ENCODE measurements at regions of chr5 and their contacts with region 1.

Region 1: GRCh38 chr5:43484106-43484849 is 613 bp upstream of the TMEM267 start:
- DNase-seq: peak; percentile 56 to 74
- ATAC-seq: peak; percentile 86 to 88
- H3K4me3 ChIP-seq: peak overlapping the region; percentile 72 to 98 (median 84)
- H3K27ac ChIP-seq: peak overlapping the region; percentile 93 to 98 (median 96)
- H3K4me1 ChIP-seq: peaks cover 17% of the 10 kb centered on the region in 2 donors
- H3K27me3 ChIP-seq: no peaks in the 10 kb centered on the region
- CTCF ChIP-seq: peak; percentile 61 to 81 (median 63)
- POLR2A ChIP-seq: peak in 1 of 2 donors; percentile 10

Region 2: DNA sequence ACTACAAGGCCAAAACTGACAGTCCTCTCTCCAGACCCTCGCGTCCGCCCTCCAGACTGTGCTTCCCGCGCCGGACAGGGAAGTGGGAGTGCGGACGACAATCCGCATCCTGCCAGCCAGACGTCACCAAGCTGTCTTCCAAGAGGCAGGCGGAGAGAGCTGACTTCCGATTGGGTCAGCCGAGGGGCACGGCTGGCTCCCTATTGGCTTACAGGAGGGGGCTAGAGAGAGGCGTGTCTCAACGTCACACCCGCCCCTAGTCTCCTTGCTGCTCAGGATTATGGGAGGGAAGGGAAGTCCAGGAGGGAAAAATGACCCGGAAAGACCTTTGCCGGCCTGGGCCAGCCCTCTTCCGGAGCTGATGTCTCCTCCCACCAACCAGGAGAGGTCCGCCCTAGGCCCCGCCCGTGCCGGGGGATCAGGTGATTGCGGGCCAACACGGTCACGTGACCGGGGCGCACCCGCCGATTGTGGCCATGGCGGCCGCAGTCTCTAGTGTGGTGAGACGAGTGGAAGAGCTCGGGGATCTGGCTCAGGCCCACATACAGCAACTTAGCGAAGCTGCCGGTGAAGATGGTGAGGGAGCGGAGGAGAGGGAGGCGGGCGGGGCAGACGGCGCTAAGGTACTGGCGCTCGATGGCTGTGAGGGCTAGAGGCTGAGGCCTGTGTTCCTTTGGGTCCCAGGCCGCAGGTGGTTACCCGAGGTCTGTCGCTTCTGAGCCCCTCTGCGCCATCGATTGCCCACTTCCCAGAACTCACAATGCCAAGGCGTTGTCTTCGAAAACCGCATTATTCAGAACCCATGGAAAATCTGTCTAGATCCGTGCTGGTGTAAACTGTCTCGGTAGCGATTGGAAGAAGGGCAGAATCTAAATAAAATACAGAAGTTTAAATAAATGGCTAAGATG is 1580.1 kb before region 1 on chr5 and contains the start of gene RIMOC1:
- in situ Hi-C with region 1: no loop called
- intact Hi-C with region 1: loop called (anchors 10 kb)
- DNase-seq: peak; percentile 98 to 99
- ATAC-seq: peak; percentile 98 to 99
- H3K4me3 ChIP-seq: peak within 1 kb of the TSS; percentile 80 to 88 (median 84)
- H3K27ac ChIP-seq: peak within 1 kb of the TSS; percentile 89 to 95 (median 93)
- H3K4me1 ChIP-seq: peaks cover 27 to 46% of the 10 kb centered on the region in 2 donors
- H3K27me3 ChIP-seq: no peaks in the 10 kb centered on the region
- CTCF ChIP-seq: peak in 2 of 5 experiments; percentile 50 to 59
- POLR2A ChIP-seq: peak; percentile 85 to 95
- total RNA-seq, gene RIMOC1: 5.0 to 8.2 (median 6.2) TPM

Region 3: GRCh38 chr5:43120720-43121564 is 363.3 kb before region 1 on chr5 and contains the start of gene ZNF131:
- in situ Hi-C with region 1: no loop called
- intact Hi-C with region 1: loop called (anchors 5 kb)
- DNase-seq: peak; percentile 93 to 94
- ATAC-seq: peak; percentile 83 to 86
- H3K4me3 ChIP-seq: peak within 1 kb of the TSS; percentile 86 to 94 (median 92)
- H3K27ac ChIP-seq: peak within 1 kb of the TSS; percentile 94 to 98 (median 96)
- H3K4me1 ChIP-seq: peaks cover 35 to 50% of the 10 kb centered on the region in 2 donors
- H3K27me3 ChIP-seq: no peaks in the 10 kb centered on the region
- CTCF ChIP-seq: peak in 1 of 5 experiments; percentile 19
- POLR2A ChIP-seq: peak in 1 of 2 donors; percentile 86
- total RNA-seq, gene ZNF131: 16.4 to 44.6 (median 18.7) TPM

Region 4: DNA sequence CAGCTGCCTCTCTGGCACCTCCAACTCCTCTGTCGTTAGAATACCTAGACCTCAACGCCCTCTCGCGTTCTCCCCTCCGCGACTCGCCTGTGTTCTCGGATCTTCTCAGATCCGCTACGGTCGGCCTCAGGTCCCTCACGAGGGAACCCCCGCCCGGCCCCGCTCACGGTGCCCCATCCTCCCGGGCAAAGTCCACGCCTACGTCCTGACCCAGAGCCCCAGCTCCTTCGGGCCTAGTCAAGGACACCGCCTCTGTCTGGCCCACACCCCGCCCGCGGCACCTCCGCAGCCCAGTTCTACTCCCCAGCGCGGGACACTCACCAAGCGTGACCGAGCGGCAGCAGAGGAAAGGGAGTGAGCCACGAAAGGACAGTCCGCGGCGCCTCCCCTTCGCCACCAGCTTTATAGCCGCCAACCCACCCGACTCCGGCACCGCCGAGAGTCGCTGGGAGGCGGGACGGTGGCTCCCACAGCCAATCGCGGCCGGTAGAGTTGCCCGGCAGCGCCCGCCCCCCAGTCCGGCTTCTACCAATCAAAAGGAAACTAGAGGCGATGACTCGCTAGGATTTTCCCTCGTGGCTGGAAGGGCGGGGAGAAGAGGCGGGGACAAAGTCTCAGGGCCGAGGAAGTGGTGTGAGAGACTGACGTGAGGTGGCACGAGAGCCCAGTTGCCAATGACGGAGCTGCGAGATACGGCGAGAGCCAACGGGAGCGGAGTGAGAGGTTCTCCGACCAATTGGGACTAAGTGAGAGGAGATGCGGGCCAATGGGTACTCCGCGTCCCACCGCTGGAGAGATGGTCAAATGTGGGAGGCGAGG is 171.0 kb before region 1 on chr5 and contains the start of gene HMGCS1:
- in situ Hi-C with region 1: loop called in 2 of 4 experiments (anchors 10 to 25 kb)
- intact Hi-C with region 1: loop called (anchors 5 kb)
- DNase-seq: peak; percentile 98 to 99
- ATAC-seq: peak; percentile 99
- H3K4me3 ChIP-seq: peak within 1 kb of the TSS; percentile 77 to 93 (median 83)
- H3K27ac ChIP-seq: peak within 1 kb of the TSS; percentile 89 to 94 (median 90)
- H3K4me1 ChIP-seq: peaks cover 18 to 28% of the 10 kb centered on the region in 2 donors
- H3K27me3 ChIP-seq: no peaks in the 10 kb centered on the region
- CTCF ChIP-seq: peak in 1 of 5 experiments; percentile 14
- POLR2A ChIP-seq: peak; percentile 87 to 96
- total RNA-seq, gene HMGCS1: 6.1 to 15.0 (median 8.2) TPM

Region 5: DNA sequence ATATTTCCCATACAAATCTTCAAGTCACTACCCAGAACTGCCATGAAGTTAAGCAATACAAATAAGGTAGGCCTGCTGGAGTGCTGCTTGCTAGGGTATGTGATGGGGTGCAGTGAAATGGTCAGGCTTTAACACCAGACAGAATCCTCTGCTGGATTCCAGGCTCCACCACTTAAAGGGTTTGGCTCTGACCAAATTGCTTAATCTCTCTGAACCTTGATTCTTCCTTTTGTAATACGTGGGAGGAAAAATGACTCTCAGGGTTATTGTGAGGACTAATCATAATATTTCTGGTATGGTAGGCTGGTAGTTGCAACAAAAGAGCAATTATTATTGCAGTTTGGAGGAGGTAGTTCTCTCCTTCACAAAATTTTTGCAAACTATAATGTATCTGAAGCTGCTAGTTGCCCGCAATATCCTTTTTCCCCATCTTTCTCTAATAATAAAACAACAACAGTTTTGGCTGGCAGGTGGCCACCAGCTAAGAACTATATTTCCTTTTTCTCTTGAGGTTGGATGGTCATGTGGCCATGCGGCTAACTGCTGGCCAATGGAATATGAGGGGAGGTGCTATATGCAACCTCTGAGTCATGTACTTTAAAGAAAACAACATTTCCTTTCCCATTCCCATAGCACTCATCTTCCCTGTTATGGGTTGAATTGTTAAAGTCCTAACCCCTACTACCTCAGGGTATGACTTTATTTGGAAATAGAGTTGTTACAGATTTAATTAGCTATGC is 116.2 kb before region 1 on chr5:
- in situ Hi-C with region 1: no loop called
- intact Hi-C with region 1: no loop called
- DNase-seq: no peak
- ATAC-seq: no peak
- H3K4me3 ChIP-seq: no peak overlapping the region
- H3K27ac ChIP-seq: no peak overlapping the region
- H3K4me1 ChIP-seq: no peaks in the 10 kb centered on the region
- H3K27me3 ChIP-seq: no peaks in the 10 kb centered on the region
- CTCF ChIP-seq: no peak
- POLR2A ChIP-seq: no peak

Region 6: DNA sequence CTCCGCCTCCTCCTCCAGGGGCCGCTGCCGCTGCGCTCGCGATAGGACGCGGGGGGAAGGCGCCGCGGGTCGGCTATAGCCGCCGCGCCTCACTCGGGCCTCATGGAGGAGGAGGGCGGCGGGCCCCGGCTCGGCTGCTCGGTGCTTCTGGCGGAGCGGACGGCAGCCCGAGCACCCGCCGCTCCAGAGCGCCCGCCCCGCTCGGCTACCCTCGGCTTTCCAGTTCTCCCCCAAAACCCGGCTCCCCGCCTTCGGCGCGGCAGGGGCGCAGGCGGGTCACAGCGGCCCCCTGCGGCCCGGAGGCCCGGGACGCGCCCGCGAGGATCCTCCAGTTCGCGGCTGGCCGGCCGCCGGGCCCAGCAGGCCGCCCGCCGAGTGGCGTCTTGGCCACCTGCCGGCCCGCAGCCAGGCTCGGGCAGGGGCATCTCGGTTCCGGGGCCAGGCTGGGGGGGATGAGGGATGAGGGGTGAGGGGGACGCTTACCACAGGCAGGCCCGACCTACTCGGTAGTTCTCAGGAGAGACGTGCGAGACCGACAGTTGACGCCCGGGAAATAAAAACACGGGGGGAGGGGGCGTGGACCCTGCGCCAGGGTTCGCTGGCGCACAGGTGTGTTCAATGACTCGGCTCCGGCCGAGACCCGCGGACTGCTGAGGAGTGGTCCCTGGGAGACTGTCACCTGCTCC is 72.7 kb after region 1 on chr5 and contains the start of gene PAIP1:
- in situ Hi-C with region 1: no loop called
- intact Hi-C with region 1: loop called (anchors 2 kb)
- DNase-seq: peak; percentile 65 to 77
- ATAC-seq: peak; percentile 91 to 92
- H3K4me3 ChIP-seq: peak within 1 kb of the TSS; percentile 66 to 96 (median 73)
- H3K27ac ChIP-seq: peak within 1 kb of the TSS; percentile 86 to 98 (median 94)
- H3K4me1 ChIP-seq: peaks cover 38 to 40% of the 10 kb centered on the region in 2 donors
- H3K27me3 ChIP-seq: no peaks in the 10 kb centered on the region
- CTCF ChIP-seq: peak; percentile 33 to 85 (median 78)
- POLR2A ChIP-seq: peak; percentile 6 to 39
- total RNA-seq, gene PAIP1: 123 to 184 (median 161) TPM

Region 7: GRCh38 chr5:44808435-44809214 is 1324.3 kb after region 1 on chr5 and contains the start of gene MRPS30:
- in situ Hi-C with region 1: loop called in 1 of 4 experiments (anchors 25 kb)
- intact Hi-C with region 1: no loop called
- DNase-seq: peak; percentile 95 to 96
- ATAC-seq: peak; percentile 99 to 100
- H3K4me3 ChIP-seq: peak within 1 kb of the TSS; percentile 77 to 100 (median 98)
- H3K27ac ChIP-seq: peak within 1 kb of the TSS; percentile 85 to 96 (median 92)
- H3K4me1 ChIP-seq: peaks cover 21% of the 10 kb centered on the region in 2 donors
- H3K27me3 ChIP-seq: no peaks in the 10 kb centered on the region
- CTCF ChIP-seq: peak in 2 of 5 experiments; percentile 22 to 23
- POLR2A ChIP-seq: peak; percentile 63 to 67
- total RNA-seq, gene MRPS30: 95.2 to 141 (median 116) TPM